ENCODE measurements at regions of chr16 and their contacts with region 1.

Region 1: DNA sequence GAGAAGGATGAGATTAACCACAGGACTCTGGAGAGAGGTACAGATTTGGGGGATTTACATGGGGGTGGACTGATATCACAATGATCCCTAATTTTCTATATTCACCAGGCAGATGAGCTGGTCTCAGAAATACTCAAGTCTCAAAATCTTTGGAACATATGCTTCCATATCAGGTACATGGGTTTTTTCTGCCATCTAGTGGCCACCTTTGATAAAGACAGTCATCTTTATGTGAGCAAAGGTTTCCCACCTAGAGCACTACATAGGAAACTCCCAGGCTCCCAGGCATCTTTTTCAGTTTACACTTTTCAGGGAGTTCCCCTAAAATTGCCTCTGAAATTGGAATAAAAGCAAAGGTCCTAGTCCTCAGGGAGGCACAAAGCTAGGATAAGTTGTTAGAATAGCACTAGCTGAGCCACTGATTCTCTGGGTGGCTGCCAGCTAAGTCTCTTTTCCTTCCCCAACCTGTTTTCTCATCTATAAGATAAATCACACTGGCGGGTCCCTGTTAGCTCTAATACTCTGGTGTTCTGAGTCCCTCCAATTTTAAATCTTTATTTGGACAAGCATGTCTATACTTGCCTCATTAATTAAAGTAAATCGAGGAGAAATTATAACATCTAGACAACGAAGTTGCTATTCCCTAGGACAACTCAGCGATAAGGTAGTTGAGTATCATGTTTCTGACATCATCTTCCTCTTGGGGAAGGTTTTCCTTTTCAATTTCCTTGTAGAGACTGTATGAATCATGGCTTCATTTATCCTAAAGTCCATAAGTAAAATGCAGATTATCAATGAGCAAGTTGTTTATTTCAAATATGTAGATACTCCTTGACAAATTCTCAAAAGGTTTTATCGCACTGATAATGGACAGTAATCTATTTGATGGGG is 19.0 kb upstream of the MON1B start:
- DNase-seq: peak; percentile 82
- H3K4me3 Mint-ChIP-seq: no peak overlapping the region
- H3K27ac Mint-ChIP-seq: no peak overlapping the region
- H3K4me1 Mint-ChIP-seq: no peaks in the 10 kb centered on the region
- H3K27me3 Mint-ChIP-seq: peaks cover 15% of the 10 kb centered on the region

Region 2: GRCh38 chr16:75789237-75789636 is 1382.8 kb before region 1 on chr16:
- intact Hi-C with region 1: loop called (anchors 1 kb)
- DNase-seq: peak; percentile 73
- H3K4me3 Mint-ChIP-seq: no peak overlapping the region
- H3K27ac Mint-ChIP-seq: no peak overlapping the region
- H3K4me1 Mint-ChIP-seq: no peaks in the 10 kb centered on the region
- H3K27me3 Mint-ChIP-seq: peaks cover 5% of the 10 kb centered on the region

Region 3: GRCh38 chr16:76668207-76668725 is 503.7 kb before region 1 on chr16:
- intact Hi-C with region 1: loop called (anchors 10 kb)
- DNase-seq: no peak
- H3K4me3 Mint-ChIP-seq: no peak overlapping the region
- H3K27ac Mint-ChIP-seq: no peak overlapping the region
- H3K4me1 Mint-ChIP-seq: no peaks in the 10 kb centered on the region
- H3K27me3 Mint-ChIP-seq: no peaks in the 10 kb centered on the region